HEK293 (cell line): ENCODE measurements at regions of chr7 and their contacts with region 1.

Region 1: DNA sequence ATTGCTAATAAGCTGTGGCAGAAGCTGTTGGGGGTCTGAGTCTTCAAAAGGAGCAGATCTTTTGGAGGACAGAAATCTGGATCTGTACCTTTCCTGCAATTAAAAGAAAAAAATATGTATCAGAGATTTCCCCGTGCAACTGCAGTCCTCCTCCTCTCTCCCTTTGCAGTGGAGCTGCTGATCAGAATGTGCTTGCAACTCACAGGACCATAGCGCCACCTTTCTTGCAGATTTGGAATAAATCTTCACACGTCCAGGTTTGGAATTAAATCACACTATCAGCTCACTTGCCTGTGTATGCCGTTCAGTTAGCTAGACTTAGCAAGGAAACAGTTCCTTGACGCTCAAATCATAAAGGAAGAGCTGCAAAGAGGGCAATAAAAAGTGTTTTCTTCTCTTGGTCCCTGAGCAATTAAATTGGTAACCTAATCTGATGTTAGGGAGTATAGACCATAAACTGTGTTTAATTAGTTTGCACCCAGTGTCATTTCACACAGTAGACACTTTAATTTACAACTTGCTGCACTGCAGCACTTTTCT is 77.4 kb downstream of the PON1 start:
- H3K4me3 ChIP-seq: no peak overlapping the region
- H3K27ac ChIP-seq: peak overlapping the region; percentile 20; the same call in 1 of the 2 replicates
- H3K4me1 ChIP-seq: peaks cover 11% of the 10 kb centered on the region
- CTCF ChIP-seq: peak; percentile 60; the same call in 1 of the 2 replicates

Region 2: GRCh38 chr7:95476904-95477594 is 230.1 kb after region 1 on chr7:
- CTCF ChIA-PET with region 1: interaction called, 12 read pairs
- POLR2A ChIA-PET with region 1: interaction called, 4 read pairs
- H3K4me3 ChIP-seq: no peak overlapping the region
- H3K27ac ChIP-seq: no peak overlapping the region
- H3K4me1 ChIP-seq: no peaks in the 10 kb centered on the region
- CTCF ChIP-seq: peak; percentile 72; the same call in 1 of the 2 replicates